ENCODE measurements at regions of chr2 and their contacts with region 1.

Region 1: DNA sequence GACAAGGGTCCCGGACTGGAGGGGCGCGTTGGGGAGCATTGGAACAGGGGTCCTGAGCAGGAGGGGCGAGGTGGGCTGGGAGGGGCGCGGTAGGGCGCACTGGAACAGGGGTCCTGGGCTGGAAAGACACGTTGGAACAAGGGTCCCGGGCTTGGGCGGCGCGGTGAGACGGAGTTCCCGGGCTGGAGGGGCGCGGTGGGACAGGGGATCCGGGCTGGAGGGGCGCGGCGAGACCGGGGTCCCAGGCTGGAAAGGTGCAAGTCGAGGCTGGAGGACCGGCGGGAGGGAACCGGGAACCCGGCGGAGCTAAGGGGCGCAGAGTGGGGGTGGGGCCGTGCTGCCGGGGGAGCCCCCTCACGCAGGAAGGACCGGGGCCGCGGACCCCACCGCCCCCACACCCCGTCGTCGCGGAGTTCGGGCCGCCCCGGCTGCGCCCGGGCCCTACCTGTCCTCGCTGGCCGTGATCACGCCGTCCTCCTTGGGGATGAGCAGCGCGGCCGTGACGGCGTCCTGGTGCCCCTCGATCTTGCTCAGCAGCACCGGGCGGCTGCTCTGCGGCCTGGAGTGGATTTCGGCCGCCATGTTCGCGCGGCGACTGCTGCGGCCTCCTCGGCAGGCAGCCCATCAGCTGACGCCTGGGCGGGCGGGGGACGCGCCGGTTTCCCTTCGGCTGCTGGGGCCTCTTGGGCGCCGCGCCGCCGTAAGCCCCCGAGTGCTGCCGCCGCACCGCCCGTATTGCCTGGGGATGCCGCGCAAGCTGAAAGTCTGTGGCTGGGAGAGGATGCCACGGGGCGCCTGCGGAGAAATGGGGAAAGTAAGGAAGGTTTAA is at the start of gene WDFY1:
- DNase-seq: peak; percentile 64 to 80 (median 70)
- ATAC-seq: peak; percentile 95
- H3K4me3 ChIP-seq: peak within 1 kb of the TSS; percentile 77
- H3K4me3 Mint-ChIP-seq: peak within 1 kb of the TSS; percentile 88 to 98 (median 92)
- H3K27ac ChIP-seq: peak within 1 kb of the TSS; percentile 67
- H3K27ac Mint-ChIP-seq: peak within 1 kb of the TSS; percentile 76 to 93 (median 85)
- H3K4me1 ChIP-seq: peaks cover 24 to 40% of the 10 kb centered on the region in 2 donors
- H3K4me1 Mint-ChIP-seq: peaks cover 39 to 67% (median 62%) of the 10 kb centered on the region in 7 donors
- H3K27me3 ChIP-seq: no peaks in the 10 kb centered on the region
- H3K27me3 Mint-ChIP-seq: no peaks in the 10 kb centered on the region
- total RNA-seq, gene WDFY1: 25.3 to 80.1 (median 29.9) TPM

Region 2: DNA sequence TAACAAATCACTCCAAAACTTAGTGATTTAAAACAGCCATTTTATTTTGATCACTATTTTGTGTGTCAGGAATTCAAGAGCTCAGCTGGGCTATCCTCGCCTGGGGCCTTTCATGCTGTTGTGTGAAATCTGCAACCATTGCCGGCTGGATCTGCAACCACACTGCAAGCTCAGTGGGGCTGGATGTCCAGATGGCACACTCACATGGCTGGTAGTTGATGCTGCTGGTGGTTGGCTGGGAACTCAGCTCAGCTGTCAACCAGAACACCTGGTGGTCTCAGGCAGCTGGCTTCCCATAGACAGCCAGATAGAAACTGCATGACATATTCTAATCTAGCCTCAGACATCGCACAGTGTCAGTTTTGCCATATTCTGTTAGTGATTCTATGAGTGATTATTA is 76.9 kb before region 1 on chr2:
- CTCF ChIA-PET with region 1: no interaction called
- POLR2A ChIA-PET with region 1: no interaction called
- intact Hi-C with region 1: loop called (anchors 1 to 5 kb)
- DNase-seq: no peak
- ATAC-seq: no peak
- H3K4me3 ChIP-seq: no peak overlapping the region
- H3K4me3 Mint-ChIP-seq: no peak overlapping the region
- H3K27ac ChIP-seq: no peak overlapping the region
- H3K27ac Mint-ChIP-seq: no peak overlapping the region
- H3K4me1 ChIP-seq: peaks cover 22% of the 10 kb centered on the region in 2 donors
- H3K4me1 Mint-ChIP-seq: peaks cover 19 to 34% (median 24%) of the 10 kb centered on the region in 7 donors
- H3K27me3 ChIP-seq: no peaks in the 10 kb centered on the region
- H3K27me3 Mint-ChIP-seq: no peaks in the 10 kb centered on the region

Region 3: GRCh38 chr2:223930103-223930976 is 14.6 kb before region 1 on chr2:
- CTCF ChIA-PET with region 1: no interaction called
- POLR2A ChIA-PET with region 1: interaction called, 6 read pairs
- intact Hi-C with region 1: loop called (anchors 1 to 2 kb)
- DNase-seq: no peak
- ATAC-seq: peak; percentile 55
- H3K4me3 ChIP-seq: no peak overlapping the region
- H3K4me3 Mint-ChIP-seq: peak overlapping the region; percentile 50 to 75 (median 70)
- H3K27ac ChIP-seq: peak overlapping the region; percentile 39
- H3K27ac Mint-ChIP-seq: peak overlapping the region; percentile 67 to 93 (median 76)
- H3K4me1 ChIP-seq: peaks cover 18 to 21% of the 10 kb centered on the region in 2 donors
- H3K4me1 Mint-ChIP-seq: peaks cover 25 to 68% (median 58%) of the 10 kb centered on the region in 7 donors
- H3K27me3 ChIP-seq: no peaks in the 10 kb centered on the region
- H3K27me3 Mint-ChIP-seq: no peaks in the 10 kb centered on the region

Region 4: DNA sequence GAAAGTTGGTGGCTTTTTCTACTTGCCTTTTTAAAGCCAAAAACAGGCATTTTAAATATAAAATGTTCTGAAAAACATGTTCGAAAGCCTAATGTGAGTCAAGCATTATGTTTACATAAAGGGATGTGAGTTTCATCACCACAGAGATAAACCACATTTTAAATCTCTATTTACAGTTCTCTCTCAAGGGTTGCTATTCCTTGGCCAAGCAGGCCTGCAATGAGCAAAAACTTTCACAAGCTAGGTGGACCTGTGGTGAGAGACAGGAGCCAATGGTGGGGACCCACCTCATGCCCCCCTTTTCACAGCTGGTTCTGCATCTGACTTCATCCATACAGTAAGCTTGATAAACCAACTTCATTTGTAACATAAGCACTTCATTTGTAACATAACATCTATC is 575.1 kb after region 1 on chr2:
- CTCF ChIA-PET with region 1: no interaction called
- POLR2A ChIA-PET with region 1: no interaction called
- intact Hi-C with region 1: loop called in 1 of 2 experiments (anchors 10 kb)
- DNase-seq: peak in 2 of 9 donors; percentile 2 to 29
- ATAC-seq: peak; percentile 33
- H3K4me3 ChIP-seq: no peak overlapping the region
- H3K4me3 Mint-ChIP-seq: peak overlapping the region in 9 of 10 donors; percentile 11 to 64 (median 32)
- H3K27ac ChIP-seq: no peak overlapping the region
- H3K27ac Mint-ChIP-seq: peak overlapping the region in 7 of 9 donors; percentile 3 to 76 (median 23)
- H3K4me1 ChIP-seq: peaks cover 33 to 35% of the 10 kb centered on the region in 2 donors
- H3K4me1 Mint-ChIP-seq: peaks cover 56 to 72% (median 63%) of the 10 kb centered on the region in 7 donors
- H3K27me3 ChIP-seq: no peaks in the 10 kb centered on the region
- H3K27me3 Mint-ChIP-seq: no peaks in the 10 kb centered on the region

Region 5: DNA sequence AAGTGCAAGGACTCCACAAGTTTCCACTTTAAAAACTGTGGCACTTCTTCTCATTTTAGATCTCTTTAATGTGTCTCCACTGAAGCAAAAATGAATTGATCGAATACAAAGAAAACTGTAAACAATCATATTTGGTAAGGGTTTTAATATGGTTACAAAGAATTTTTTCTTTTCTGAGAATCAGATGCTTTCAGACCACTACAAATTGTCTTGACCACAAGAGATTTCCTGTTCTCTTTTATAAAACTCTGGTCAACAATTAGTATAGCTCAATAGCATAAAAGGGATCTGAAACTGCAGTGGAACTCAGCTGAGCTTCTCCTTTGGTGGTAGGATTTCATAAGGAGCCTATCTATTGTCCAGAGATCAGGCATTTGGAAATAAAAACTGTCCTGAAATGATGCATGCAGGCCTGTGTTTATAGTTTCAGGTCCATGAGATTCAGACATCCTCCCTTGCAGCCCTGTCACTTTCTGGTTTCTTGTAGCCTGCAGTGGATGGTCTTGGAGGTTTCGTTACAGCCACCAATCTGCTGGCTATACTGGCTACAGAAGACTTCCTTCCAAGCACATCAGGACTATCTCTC is 977.3 kb after region 1 on chr2:
- CTCF ChIA-PET with region 1: no interaction called
- POLR2A ChIA-PET with region 1: no interaction called
- intact Hi-C with region 1: loop called in 1 of 2 experiments (anchors 5 kb)
- DNase-seq: no peak
- ATAC-seq: peak; percentile 55
- H3K4me3 ChIP-seq: no peak overlapping the region
- H3K4me3 Mint-ChIP-seq: peak overlapping the region in 2 of 10 donors; percentile 15 to 17
- H3K27ac ChIP-seq: peak overlapping the region; percentile 44
- H3K27ac Mint-ChIP-seq: peak overlapping the region; percentile 26 to 99 (median 82)
- H3K4me1 ChIP-seq: peaks cover 35 to 52% of the 10 kb centered on the region in 2 donors
- H3K4me1 Mint-ChIP-seq: peaks cover 36 to 55% (median 50%) of the 10 kb centered on the region in 7 donors
- H3K27me3 ChIP-seq: no peaks in the 10 kb centered on the region
- H3K27me3 Mint-ChIP-seq: no peaks in the 10 kb centered on the region